ENCODE measurements at regions of chr1 and their contacts with region 1.

Region 1: GRCh38 chr1:110619412-110620249 is 13.5 kb upstream of the KCNA2 start:
- DNase-seq: peak; percentile 89
- ATAC-seq: peak; percentile 89
- H3K4me3 Mint-ChIP-seq: peak overlapping the region; percentile 92
- H3K27ac Mint-ChIP-seq: peak overlapping the region; percentile 87
- H3K4me1 Mint-ChIP-seq: peaks cover 25% of the 10 kb centered on the region
- H3K27me3 Mint-ChIP-seq: no peaks in the 10 kb centered on the region
- CTCF ChIP-seq: peak; percentile 93

Region 2: GRCh38 chr1:110196917-110197765 is 422.5 kb before region 1 on chr1:
- CTCF ChIA-PET with region 1: no interaction called
- POLR2A ChIA-PET with region 1: no interaction called
- intact Hi-C with region 1: loop called (anchors 5 kb)
- DNase-seq: no peak
- ATAC-seq: peak; percentile 98
- H3K4me3 Mint-ChIP-seq: no peak overlapping the region
- H3K27ac Mint-ChIP-seq: no peak overlapping the region
- H3K4me1 Mint-ChIP-seq: peaks cover 3% of the 10 kb centered on the region
- H3K27me3 Mint-ChIP-seq: no peaks in the 10 kb centered on the region
- CTCF ChIP-seq: peak; percentile 36

Region 3: GRCh38 chr1:110554871-110555801 is 64.5 kb before region 1 on chr1:
- CTCF ChIA-PET with region 1: interaction called, 8 read pairs
- POLR2A ChIA-PET with region 1: interaction called, 4 read pairs
- intact Hi-C with region 1: loop called (anchors 1 kb)
- DNase-seq: peak; percentile 50
- ATAC-seq: peak; percentile 96
- H3K4me3 Mint-ChIP-seq: peak overlapping the region; percentile 16
- H3K27ac Mint-ChIP-seq: no peak overlapping the region
- H3K4me1 Mint-ChIP-seq: peaks cover 3% of the 10 kb centered on the region
- H3K27me3 Mint-ChIP-seq: peaks cover 46% of the 10 kb centered on the region
- CTCF ChIP-seq: peak; percentile 33

Region 4: DNA sequence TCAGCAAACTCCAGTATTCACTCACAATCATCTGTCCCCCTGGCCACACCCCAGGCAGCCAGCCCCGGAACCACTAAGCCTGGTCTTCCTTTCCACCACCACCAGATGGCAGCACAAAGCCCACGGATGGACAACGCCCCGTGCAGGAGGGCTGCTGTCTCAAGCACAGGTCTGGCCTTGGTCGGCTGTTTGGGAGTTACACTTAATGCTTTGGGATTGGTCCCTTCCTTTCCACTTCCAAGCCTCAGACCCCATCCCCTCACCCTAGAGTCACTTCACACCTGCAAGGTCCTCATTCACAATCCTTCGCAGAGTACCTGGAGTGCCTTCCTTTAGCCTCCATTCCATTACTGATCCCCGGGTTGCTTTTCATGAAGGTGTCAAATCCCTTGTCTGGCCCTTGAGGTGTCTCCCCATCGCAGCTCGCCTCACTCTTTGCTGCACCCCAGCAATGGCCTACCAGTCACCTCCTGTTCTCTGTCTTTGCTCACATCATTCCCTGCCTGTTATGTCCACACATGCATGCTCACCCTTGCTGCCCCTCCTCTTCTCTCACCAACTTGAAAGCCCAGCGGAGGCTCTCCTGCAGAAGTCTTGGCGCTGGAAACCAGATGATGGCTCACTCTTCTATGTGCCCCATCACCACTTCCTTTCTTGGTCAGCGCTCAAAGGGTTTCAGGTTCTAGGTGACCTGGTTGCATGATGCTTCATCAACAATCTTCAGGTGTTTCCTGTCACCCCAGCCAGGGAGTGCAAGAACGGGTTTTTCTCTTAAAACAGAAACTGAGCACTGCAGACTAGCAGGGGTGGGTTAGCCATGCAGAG is 11.4 kb after region 1 on chr1:
- CTCF ChIA-PET with region 1: interaction called, 33 read pairs
- POLR2A ChIA-PET with region 1: interaction called, 25 read pairs
- intact Hi-C with region 1: loop called (anchors 1 kb)
- DNase-seq: peak; percentile 72
- ATAC-seq: peak; percentile 73
- H3K4me3 Mint-ChIP-seq: no peak overlapping the region
- H3K27ac Mint-ChIP-seq: no peak overlapping the region
- H3K4me1 Mint-ChIP-seq: peaks cover 46% of the 10 kb centered on the region
- H3K27me3 Mint-ChIP-seq: no peaks in the 10 kb centered on the region
- CTCF ChIP-seq: peak; percentile 82

Region 5: DNA sequence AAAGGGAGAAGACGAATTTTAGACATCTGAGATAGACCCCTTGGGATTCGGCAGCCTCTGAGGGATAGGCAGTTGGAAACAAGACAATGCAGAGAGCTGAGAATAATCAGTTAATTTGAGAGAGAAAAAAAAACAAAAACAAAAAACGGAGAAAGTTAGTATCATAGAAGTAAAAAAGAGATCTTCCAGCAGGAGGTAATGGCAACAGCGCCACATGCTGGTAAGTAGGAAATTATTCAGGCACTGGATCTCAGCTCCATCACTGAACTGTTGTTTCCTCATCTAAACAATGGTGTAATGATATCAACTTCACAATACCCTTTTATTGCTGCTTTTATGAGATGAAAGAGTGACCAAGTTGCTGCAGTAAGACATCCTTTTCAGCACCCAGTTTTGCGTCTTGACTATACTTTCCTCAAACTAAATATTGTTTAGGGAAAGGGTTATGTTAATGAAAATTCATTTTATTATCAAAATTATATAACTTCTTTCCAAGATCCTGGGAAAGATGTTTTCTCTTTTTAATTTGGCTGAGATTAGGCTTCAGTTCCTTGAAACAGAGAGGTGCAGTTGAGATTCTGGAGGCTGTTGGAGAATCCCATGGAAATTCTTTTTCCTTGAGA is 146.5 kb after region 1 on chr1:
- CTCF ChIA-PET with region 1: interaction called, 149 read pairs
- POLR2A ChIA-PET with region 1: interaction called, 12 read pairs
- intact Hi-C with region 1: loop called (anchors 1 kb)
- DNase-seq: no peak
- ATAC-seq: peak; percentile 62
- H3K4me3 Mint-ChIP-seq: no peak overlapping the region
- H3K27ac Mint-ChIP-seq: no peak overlapping the region
- H3K4me1 Mint-ChIP-seq: peaks cover 3% of the 10 kb centered on the region
- H3K27me3 Mint-ChIP-seq: peaks cover 10% of the 10 kb centered on the region
- CTCF ChIP-seq: no peak

Region 6: DNA sequence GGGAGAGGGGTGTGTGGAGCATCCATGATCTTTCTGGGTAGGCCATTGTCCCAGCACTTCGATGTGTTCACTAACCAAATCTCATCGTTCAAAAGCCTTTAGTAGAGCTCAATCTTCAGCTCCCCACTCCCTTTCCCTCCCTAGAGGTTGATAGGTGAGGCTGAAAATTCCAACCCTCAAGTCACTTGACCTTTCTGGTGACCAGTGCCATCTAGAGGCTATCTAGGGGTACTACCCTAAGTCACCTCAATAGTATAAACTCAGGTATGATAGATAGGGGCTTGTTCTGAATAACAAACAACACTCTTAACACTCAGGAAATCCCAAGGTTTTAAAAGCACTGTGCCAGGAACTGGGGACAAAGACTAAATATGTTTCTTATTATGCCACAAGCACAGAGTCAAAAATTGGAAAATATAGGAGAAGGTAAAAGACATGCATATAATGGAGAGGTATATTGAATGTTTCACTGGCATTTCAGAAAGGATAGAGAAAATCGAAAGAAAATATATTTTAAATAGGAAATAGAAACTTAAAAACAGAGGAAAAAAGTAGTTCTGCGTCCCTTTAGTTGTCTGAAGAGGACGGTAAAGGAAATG is 210.4 kb after region 1 on chr1:
- CTCF ChIA-PET with region 1: interaction called, 11 read pairs
- POLR2A ChIA-PET with region 1: no interaction called
- intact Hi-C with region 1: no loop called
- DNase-seq: no peak
- ATAC-seq: peak; percentile 92
- H3K4me3 Mint-ChIP-seq: no peak overlapping the region
- H3K27ac Mint-ChIP-seq: no peak overlapping the region
- H3K4me1 Mint-ChIP-seq: peaks cover 34% of the 10 kb centered on the region
- H3K27me3 Mint-ChIP-seq: no peaks in the 10 kb centered on the region
- CTCF ChIP-seq: peak; percentile 97

Measured in activated B cell treated with CpG ODN at 0.5 μM for 24 hours (primary cell).